ENCODE measurements at regions of chr7 and their contacts with region 1.

Region 1: GRCh38 chr7:32479574-32480200 is 10.5 kb downstream of the LSM5 start:
- DNase-seq: peak; percentile 52
- H3K4me3 Mint-ChIP-seq: no peak overlapping the region
- H3K27ac Mint-ChIP-seq: no peak overlapping the region
- H3K4me1 Mint-ChIP-seq: no peaks in the 10 kb centered on the region
- H3K27me3 Mint-ChIP-seq: peaks cover 43% of the 10 kb centered on the region
- CTCF ChIP-seq: peak; percentile 86

Region 2: DNA sequence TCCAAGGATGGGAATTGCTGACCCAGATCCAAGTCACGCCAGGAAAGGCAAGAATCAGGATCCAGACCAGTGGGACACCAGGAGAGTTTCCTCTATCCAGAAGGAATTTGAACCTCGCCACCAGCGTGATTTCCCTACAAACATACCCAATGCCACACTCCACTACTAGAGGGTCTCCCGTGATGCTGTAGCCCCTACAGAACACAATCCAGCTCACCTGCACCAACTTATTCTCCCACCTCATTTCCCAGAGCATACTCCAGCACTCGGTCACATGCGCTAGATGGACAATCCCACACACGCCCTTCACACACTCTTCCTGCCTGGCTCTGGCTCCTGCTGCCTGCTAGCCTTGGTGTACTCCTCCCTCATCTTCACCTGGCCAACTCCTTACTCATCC is 267.4 kb before region 1 on chr7:
- CTCF ChIA-PET with region 1: interaction called, 25 read pairs
- intact Hi-C with region 1: loop called (anchors 1 kb)
- DNase-seq: no peak
- H3K4me3 Mint-ChIP-seq: no peak overlapping the region
- H3K27ac Mint-ChIP-seq: no peak overlapping the region
- H3K4me1 Mint-ChIP-seq: peaks cover 4% of the 10 kb centered on the region
- H3K27me3 Mint-ChIP-seq: peaks cover 87% of the 10 kb centered on the region
- CTCF ChIP-seq: no peak

Region 3: GRCh38 chr7:32357535-32358277 is 122.0 kb before region 1 on chr7:
- CTCF ChIA-PET with region 1: no interaction called
- intact Hi-C with region 1: loop called (anchors 5 kb)
- DNase-seq: no peak
- H3K4me3 Mint-ChIP-seq: no peak overlapping the region
- H3K27ac Mint-ChIP-seq: no peak overlapping the region
- H3K4me1 Mint-ChIP-seq: no peaks in the 10 kb centered on the region
- H3K27me3 Mint-ChIP-seq: peaks cover 94% of the 10 kb centered on the region
- CTCF ChIP-seq: peak; percentile 36

Measured in Calu3 (cell line).